ENCODE measurements at regions of chr2 and their contacts with region 1.

Region 1: DNA sequence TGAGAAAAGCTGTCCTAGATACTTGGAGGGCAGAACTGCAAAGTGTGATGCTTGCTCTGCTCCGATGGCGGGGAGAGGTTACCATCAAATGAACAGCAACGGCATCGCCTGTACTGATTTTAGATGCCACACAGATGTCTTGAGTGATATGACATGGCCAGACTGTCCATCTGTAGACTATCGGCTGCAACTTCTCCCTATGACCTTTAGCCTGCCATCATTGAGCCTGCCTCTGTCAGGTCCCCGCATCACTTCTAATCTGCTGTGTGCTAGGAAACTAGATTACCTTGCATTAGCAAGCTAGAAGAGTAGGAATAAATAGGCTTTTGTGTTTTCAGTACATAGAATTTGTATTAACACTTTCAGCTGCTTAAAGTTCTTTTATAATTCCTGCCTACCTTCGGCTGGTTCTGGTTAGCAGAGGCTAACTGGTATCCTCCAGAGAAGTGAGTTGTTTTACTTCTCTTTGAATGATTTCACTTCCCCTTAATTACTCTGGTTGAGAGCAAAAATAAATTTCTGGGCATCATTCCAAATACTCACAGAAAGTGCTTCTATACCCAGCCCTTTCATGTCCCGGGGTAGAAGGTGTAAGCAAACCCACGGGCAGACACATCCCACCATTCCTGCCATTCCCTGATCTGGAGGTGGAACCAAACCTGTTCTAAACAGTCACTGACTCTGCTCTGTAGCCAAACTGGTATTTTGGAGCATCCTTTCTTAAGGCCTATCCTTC is 24.0 kb downstream of the GAREM2 start:
- DNase-seq: no peak
- ATAC-seq: peak; percentile 88
- H3K4me3 Mint-ChIP-seq: no peak overlapping the region
- H3K27ac Mint-ChIP-seq: peak overlapping the region; percentile 50
- H3K4me1 Mint-ChIP-seq: peaks cover 28% of the 10 kb centered on the region
- H3K27me3 Mint-ChIP-seq: no peaks in the 10 kb centered on the region
- CTCF ChIP-seq: no peak

Region 2: DNA sequence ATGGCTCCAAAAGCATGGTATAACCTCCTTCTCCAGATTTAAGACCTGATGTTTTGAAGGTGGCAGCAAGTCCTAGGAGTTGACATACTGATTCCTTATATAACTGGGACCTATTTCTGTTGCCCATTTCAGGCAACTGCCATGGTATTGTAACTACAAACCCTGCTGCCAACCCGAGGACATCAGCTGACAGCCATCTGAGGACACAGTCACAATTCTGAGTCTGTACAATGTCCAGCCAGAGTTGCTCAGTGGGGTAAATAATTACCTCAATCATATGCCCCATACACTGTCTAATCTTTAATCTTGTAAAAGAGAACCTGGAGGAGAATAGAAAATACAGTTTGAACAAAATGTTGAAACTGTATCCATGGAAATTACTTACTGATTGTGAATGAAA is 32.6 kb before region 1 on chr2:
- CTCF ChIA-PET with region 1: no interaction called
- POLR2A ChIA-PET with region 1: interaction called, 11 read pairs
- intact Hi-C with region 1: no loop called
- DNase-seq: no peak
- ATAC-seq: no peak
- H3K4me3 Mint-ChIP-seq: no peak overlapping the region
- H3K27ac Mint-ChIP-seq: no peak overlapping the region
- H3K4me1 Mint-ChIP-seq: no peaks in the 10 kb centered on the region
- H3K27me3 Mint-ChIP-seq: peaks cover 3% of the 10 kb centered on the region
- CTCF ChIP-seq: no peak

Measured in activated B cell treated with CpG ODN at 0.5 μM for 24 hours (primary cell).